Mammary epithelial cell (primary cell): ENCODE measurements at regions of chr7 and their contacts with region 1.

Region 1: DNA sequence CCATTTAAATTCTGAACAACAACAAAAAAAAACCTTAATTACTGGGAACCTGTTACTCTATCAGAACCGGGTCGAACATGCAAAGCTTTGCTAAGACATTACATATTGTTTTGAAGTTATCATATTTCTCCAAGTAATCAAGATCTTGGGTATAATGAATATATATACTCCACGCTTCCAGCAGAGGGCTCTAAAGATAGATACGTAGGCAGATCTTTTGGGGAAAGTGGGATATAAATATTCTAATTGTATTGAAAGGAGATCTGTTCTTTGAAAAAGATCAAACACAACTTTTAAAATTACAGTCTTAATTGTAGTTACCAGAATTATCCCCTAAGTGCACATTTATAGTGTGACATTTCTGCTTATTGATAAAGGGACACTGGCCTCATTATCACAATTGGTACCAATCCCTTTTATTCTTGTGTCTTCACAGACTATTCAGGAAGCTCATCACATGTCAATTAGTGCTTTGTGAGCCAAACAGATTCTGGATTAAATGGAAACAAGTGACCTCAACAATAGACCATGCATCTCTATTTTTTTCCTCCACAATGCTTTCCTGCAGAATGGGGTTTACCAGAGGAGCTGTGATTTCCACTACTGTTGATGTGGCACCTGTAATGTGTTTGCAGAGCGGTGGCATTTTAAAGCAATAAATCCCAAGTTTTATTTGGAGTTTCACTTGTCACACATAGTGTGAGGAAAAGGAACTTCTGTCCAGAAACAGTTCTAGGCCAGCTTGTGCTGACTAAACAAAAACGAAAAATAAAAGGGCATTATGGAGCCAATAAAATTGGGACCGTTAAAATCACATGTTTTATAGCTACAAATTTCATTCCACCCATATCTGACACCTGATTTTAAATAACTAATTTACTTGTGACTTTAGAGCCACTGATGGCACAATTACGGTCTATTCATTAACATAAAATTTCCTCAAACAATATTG is 122.4 kb downstream of the CTTNBP2 start:
- DNase-seq: no peak
- H3K4me3 ChIP-seq: no peak overlapping the region
- H3K27ac ChIP-seq: no peak overlapping the region
- H3K4me1 ChIP-seq: no peaks in the 10 kb centered on the region
- H3K27me3 ChIP-seq: no peaks in the 10 kb centered on the region
- CTCF ChIP-seq: peak; percentile 46 to 67

Region 2: DNA sequence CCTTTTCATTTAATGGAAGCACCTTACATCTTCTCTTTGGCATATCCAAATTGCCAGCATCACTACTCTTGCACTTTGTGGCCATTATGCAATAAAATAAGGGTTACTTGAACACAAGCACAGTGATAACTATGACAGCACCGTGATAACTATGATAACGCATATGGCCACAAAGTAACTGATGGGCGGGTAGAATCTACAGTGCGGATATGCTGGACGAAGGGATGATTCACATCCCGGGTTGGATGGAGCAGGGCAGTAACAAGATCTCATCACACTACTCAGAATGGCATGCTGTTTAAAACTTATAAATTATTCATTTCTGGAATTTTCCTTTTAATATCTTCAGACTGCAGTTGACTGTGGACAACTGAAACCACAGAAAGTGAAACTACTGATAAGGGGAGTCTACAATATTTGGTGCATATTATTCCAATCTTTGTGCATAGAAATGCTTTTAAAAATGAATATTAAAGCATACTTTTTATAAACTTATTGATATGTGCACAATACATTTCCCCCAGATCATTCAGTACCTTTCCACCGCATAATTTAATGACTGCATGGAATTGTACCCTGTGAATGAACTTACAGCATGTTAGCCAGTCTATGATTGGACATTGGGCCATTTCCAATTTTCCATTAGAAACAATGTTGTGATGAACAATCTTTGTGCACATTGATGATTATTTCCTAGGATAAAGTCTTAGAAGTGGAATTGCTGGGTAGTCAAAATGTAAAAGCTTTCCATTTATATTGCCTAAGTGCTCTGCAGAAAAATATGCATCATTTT is 564.5 kb before region 1 on chr7:
- CTCF ChIA-PET with region 1: no interaction called
- dilution Hi-C with region 1: no loop called
- in situ Hi-C with region 1: no loop called
- intact Hi-C with region 1: no loop called
- DNase-seq: no peak
- H3K4me3 ChIP-seq: no peak overlapping the region
- H3K27ac ChIP-seq: no peak overlapping the region
- H3K4me1 ChIP-seq: no peaks in the 10 kb centered on the region
- H3K27me3 ChIP-seq: no peaks in the 10 kb centered on the region
- CTCF ChIP-seq: no peak

Region 3: GRCh38 chr7:117715784-117716445 is 35.0 kb before region 1 on chr7:
- CTCF ChIA-PET with region 1: no interaction called
- dilution Hi-C with region 1: no loop called
- in situ Hi-C with region 1: no loop called
- intact Hi-C with region 1: no loop called
- DNase-seq: peak; percentile 37
- H3K4me3 ChIP-seq: no peak overlapping the region
- H3K27ac ChIP-seq: no peak overlapping the region
- H3K4me1 ChIP-seq: no peaks in the 10 kb centered on the region
- H3K27me3 ChIP-seq: no peaks in the 10 kb centered on the region
- CTCF ChIP-seq: peak; percentile 45 to 75

Region 4: DNA sequence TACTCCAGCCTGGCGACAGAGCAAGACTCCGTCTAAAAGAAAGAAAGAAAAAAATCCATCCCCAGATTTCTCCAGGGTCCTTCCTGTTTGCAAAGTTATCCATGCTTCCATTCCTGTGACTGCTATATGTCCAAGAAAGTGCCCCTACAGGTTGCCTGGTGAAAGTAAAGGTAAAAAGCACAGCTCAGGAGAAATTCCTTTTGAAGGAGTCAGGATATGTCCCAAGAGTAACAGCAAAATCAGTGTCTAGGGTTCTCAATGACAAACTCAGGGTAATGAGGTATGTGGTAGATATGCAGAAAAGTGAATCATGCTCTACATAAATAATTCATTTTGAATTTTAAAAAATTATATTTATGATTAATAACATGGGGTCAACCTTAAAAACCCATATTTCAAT is 30.8 kb after region 1 on chr7:
- CTCF ChIA-PET with region 1: no interaction called
- dilution Hi-C with region 1: no loop called
- in situ Hi-C with region 1: no loop called
- intact Hi-C with region 1: no loop called
- DNase-seq: peak; percentile 37
- H3K4me3 ChIP-seq: no peak overlapping the region
- H3K27ac ChIP-seq: no peak overlapping the region
- H3K4me1 ChIP-seq: peaks cover 11% of the 10 kb centered on the region
- H3K27me3 ChIP-seq: no peaks in the 10 kb centered on the region
- CTCF ChIP-seq: peak; percentile 23 to 28

Region 5: GRCh38 chr7:118104812-118105441 is 354.0 kb after region 1 on chr7:
- CTCF ChIA-PET with region 1: no interaction called
- dilution Hi-C with region 1: no loop called
- in situ Hi-C with region 1: loop called in 1 of 2 experiments (anchors 25 kb)
- intact Hi-C with region 1: loop called (anchors 1 kb)
- DNase-seq: peak; percentile 33
- H3K4me3 ChIP-seq: no peak overlapping the region
- H3K27ac ChIP-seq: no peak overlapping the region
- H3K4me1 ChIP-seq: no peaks in the 10 kb centered on the region
- H3K27me3 ChIP-seq: no peaks in the 10 kb centered on the region
- CTCF ChIP-seq: peak; percentile 61 to 70